H1 (cell line): ENCODE measurements at regions of chr13 and their contacts with region 1.

Region 1: GRCh38 chr13:45280751-45281634 is 60.0 kb downstream of the TPT1 start:
- DNase-seq: peak; percentile 27 to 72
- H3K4me3 ChIP-seq: no peak overlapping the region
- H3K27ac ChIP-seq: no peak overlapping the region
- H3K4me1 ChIP-seq: no peaks in the 10 kb centered on the region
- H3K27me3 ChIP-seq: no peaks in the 10 kb centered on the region
- CTCF ChIP-seq: peak; percentile 78 to 86 (median 79)
- EP300 ChIP-seq: no peak
- POLR2A ChIP-seq: no peak
- RAD21 ChIP-seq: peak; percentile 92 to 94

Region 2: DNA sequence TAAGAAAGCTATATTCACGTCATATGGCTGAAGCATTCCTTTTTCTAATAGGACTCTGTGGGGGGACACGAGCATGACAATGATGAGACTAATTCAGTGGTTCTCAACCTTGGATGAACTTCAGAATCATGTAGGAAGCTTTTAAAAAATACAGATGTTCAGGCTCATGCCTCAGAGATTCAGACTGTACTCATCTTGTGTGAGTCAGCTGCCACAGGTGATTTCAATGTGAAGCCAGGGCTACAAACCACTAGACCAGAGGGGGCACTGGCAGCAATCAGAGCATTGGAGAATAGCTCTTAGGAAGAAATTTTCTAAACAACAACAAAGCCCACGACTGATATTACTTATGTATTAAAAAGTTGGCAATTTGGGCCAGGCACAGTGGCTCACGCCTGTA is 815.7 kb before region 1 on chr13:
- CTCF ChIA-PET with region 1: no interaction called
- POLR2A ChIA-PET with region 1: no interaction called
- DNase-seq: no peak
- H3K4me3 ChIP-seq: no peak overlapping the region
- H3K27ac ChIP-seq: 0 out of 2 replicates have a peak overlapping the region, but pooled peaks have one; percentile 32
- H3K4me1 ChIP-seq: peaks cover 0 to 7% (median 3%) of the 10 kb centered on the region in 4 experiments; a peak in 3 of 7 replicates
- H3K27me3 ChIP-seq: no peaks in the 10 kb centered on the region
- CTCF ChIP-seq: no peak
- EP300 ChIP-seq: no peak
- POLR2A ChIP-seq: no peak
- RAD21 ChIP-seq: no peak

Region 3: GRCh38 chr13:45047394-45048310 is 233.3 kb before region 1 on chr13:
- CTCF ChIA-PET with region 1: interaction called, 87 read pairs
- POLR2A ChIA-PET with region 1: no interaction called
- DNase-seq: peak; percentile 53 to 85
- H3K4me3 ChIP-seq: peak overlapping the region; percentile 14 to 59 (median 50); a peak in 7 of 8 replicates
- H3K27ac ChIP-seq: no peak overlapping the region
- H3K4me1 ChIP-seq: no peaks in the 10 kb centered on the region; a peak in 1 of 7 replicates
- H3K27me3 ChIP-seq: no peaks in the 10 kb centered on the region
- CTCF ChIP-seq: peak; percentile 68 to 93 (median 84)
- EP300 ChIP-seq: no peak
- POLR2A ChIP-seq: no peak
- RAD21 ChIP-seq: peak; percentile 97 to 99

Region 4: DNA sequence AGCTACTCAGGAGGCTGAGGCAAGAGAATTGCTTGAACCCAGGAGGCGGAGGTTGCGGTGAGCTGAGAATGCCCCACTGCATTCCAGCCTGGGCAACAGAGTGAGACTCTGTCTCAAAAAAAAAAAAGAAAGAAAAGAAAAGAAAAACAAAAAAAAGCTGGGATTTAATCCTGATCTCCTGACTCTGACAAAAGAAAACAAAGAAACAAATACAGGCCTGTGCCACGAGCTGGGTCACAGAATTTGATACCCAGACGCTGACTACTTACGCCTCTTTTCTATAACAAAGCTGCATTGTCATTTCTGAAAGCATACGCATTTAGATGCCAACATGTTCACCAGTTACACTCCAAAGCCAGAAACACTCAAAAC is 178.9 kb before region 1 on chr13:
- CTCF ChIA-PET with region 1: interaction called, 11 read pairs
- POLR2A ChIA-PET with region 1: no interaction called
- DNase-seq: no peak
- H3K4me3 ChIP-seq: no peak overlapping the region
- H3K27ac ChIP-seq: no peak overlapping the region
- H3K4me1 ChIP-seq: peaks cover 0 to 12% (median 9%) of the 10 kb centered on the region in 4 experiments; a peak in 4 of 7 replicates
- H3K27me3 ChIP-seq: no peaks in the 10 kb centered on the region
- CTCF ChIP-seq: no peak
- EP300 ChIP-seq: no peak
- POLR2A ChIP-seq: no peak
- RAD21 ChIP-seq: no peak

Region 5: GRCh38 chr13:45215392-45216077 is 65.5 kb before region 1 on chr13:
- CTCF ChIA-PET with region 1: interaction called, 12 read pairs
- POLR2A ChIA-PET with region 1: no interaction called
- DNase-seq: no peak
- H3K4me3 ChIP-seq: no peak overlapping the region
- H3K27ac ChIP-seq: no peak overlapping the region
- H3K4me1 ChIP-seq: peaks cover 0 to 5% (median 4%) of the 10 kb centered on the region in 4 experiments; a peak in 5 of 7 replicates
- H3K27me3 ChIP-seq: no peaks in the 10 kb centered on the region
- CTCF ChIP-seq: no peak
- EP300 ChIP-seq: no peak
- POLR2A ChIP-seq: no peak
- RAD21 ChIP-seq: no peak

Region 6: GRCh38 chr13:45297456-45298205 is 16.6 kb after region 1 on chr13:
- CTCF ChIA-PET with region 1: interaction called, 36 read pairs
- POLR2A ChIA-PET with region 1: interaction called, 3 read pairs
- DNase-seq: no peak
- H3K4me3 ChIP-seq: no peak overlapping the region
- H3K27ac ChIP-seq: no peak overlapping the region
- H3K4me1 ChIP-seq: peaks cover 0 to 2% (median under 1%) of the 10 kb centered on the region in 4 experiments; a peak in 4 of 7 replicates
- H3K27me3 ChIP-seq: no peaks in the 10 kb centered on the region
- CTCF ChIP-seq: no peak
- EP300 ChIP-seq: no peak
- POLR2A ChIP-seq: no peak
- RAD21 ChIP-seq: no peak